Naive thymus-derived CD4-positive, alpha-beta T cell (primary cell): ENCODE measurements at regions of chr19 and their contacts with region 1.

Region 1: GRCh38 chr19:45496349-45496953 is 396 bp downstream of the RTN2 start:
- DNase-seq: peak in 7 of 9 donors; percentile 44 to 75 (median 55)
- ATAC-seq: peak; percentile 33
- H3K4me3 ChIP-seq: peak overlapping the region; percentile 65
- H3K4me3 Mint-ChIP-seq: peak overlapping the region; percentile 72 to 97 (median 77)
- H3K27ac ChIP-seq: no peak overlapping the region
- H3K27ac Mint-ChIP-seq: peak overlapping the region in 4 of 9 donors; percentile 12 to 87 (median 48)
- H3K4me1 ChIP-seq: peaks cover 28 to 38% of the 10 kb centered on the region in 2 donors
- H3K4me1 Mint-ChIP-seq: peaks cover 28 to 52% (median 48%) of the 10 kb centered on the region in 7 donors
- H3K27me3 ChIP-seq: no peaks in the 10 kb centered on the region
- H3K27me3 Mint-ChIP-seq: peaks cover 12 to 37% (median 19%) of the 10 kb centered on the region in 5 donors

Region 2: GRCh38 chr19:45558399-45558878 is 62.0 kb after region 1 on chr19:
- CTCF ChIA-PET with region 1: interaction called, 4 read pairs
- POLR2A ChIA-PET with region 1: no interaction called
- intact Hi-C with region 1: loop called (anchors 1 kb)
- DNase-seq: peak; percentile 37 to 85 (median 81)
- ATAC-seq: peak; percentile 99
- H3K4me3 ChIP-seq: no peak overlapping the region
- H3K4me3 Mint-ChIP-seq: peak overlapping the region in 3 of 10 donors; percentile 52 to 75 (median 59)
- H3K27ac ChIP-seq: peak overlapping the region; percentile 18
- H3K27ac Mint-ChIP-seq: peak overlapping the region in 8 of 9 donors; percentile 14 to 86 (median 66)
- H3K4me1 ChIP-seq: peaks cover 0 to 29% of the 10 kb centered on the region in 2 donors
- H3K4me1 Mint-ChIP-seq: peaks cover 20 to 48% (median 34%) of the 10 kb centered on the region in 7 donors
- H3K27me3 ChIP-seq: no peaks in the 10 kb centered on the region
- H3K27me3 Mint-ChIP-seq: no peaks in the 10 kb centered on the region